ENCODE measurements at regions of chr5 and their contacts with region 1.

Region 1: GRCh38 chr5:119411935-119412602 is 40.2 kb upstream of the HSD17B4 start:
- DNase-seq: peak; percentile 76
- ATAC-seq: peak; percentile 94
- H3K4me3 ChIP-seq: peak overlapping the region; percentile 44 to 52
- H3K27ac ChIP-seq: peak overlapping the region; percentile 3; the same call in 1 of the 2 replicates
- H3K4me1 ChIP-seq: peaks cover 0 to 10% of the 10 kb centered on the region in 2 experiments; a peak in 2 of 4 replicates
- H3K27me3 ChIP-seq: no peaks in the 10 kb centered on the region
- CTCF ChIP-seq: peak; percentile 85 to 97 (median 97)
- POLR2A ChIP-seq: no peak
- RAD21 ChIP-seq: peak; percentile 92

Region 2: GRCh38 chr5:118891252-118891651 is 520.8 kb before region 1 on chr5:
- CTCF ChIA-PET with region 1: no interaction called
- POLR2A ChIA-PET with region 1: no interaction called
- RAD21 ChIA-PET with region 1: no interaction called
- intact Hi-C with region 1: no loop called
- DNase-seq: no peak
- ATAC-seq: no peak
- H3K4me3 ChIP-seq: no peak overlapping the region
- H3K27ac ChIP-seq: no peak overlapping the region
- H3K4me1 ChIP-seq: no peaks in the 10 kb centered on the region
- H3K27me3 ChIP-seq: no peaks in the 10 kb centered on the region
- CTCF ChIP-seq: no peak
- POLR2A ChIP-seq: no peak
- RAD21 ChIP-seq: no peak

Region 3: GRCh38 chr5:119022017-119022745 is 389.9 kb before region 1 on chr5:
- CTCF ChIA-PET with region 1: interaction called, 33 read pairs
- POLR2A ChIA-PET with region 1: no interaction called
- RAD21 ChIA-PET with region 1: no interaction called
- intact Hi-C with region 1: loop called (anchors 1 kb)
- DNase-seq: no peak
- ATAC-seq: peak; percentile 59
- H3K4me3 ChIP-seq: no peak overlapping the region
- H3K27ac ChIP-seq: no peak overlapping the region
- H3K4me1 ChIP-seq: no peaks in the 10 kb centered on the region
- H3K27me3 ChIP-seq: no peaks in the 10 kb centered on the region
- CTCF ChIP-seq: peak; percentile 30 to 78 (median 57); a peak in 4 of 6 replicates
- POLR2A ChIP-seq: no peak
- RAD21 ChIP-seq: peak; percentile 88

Region 4: GRCh38 chr5:119070828-119071572 is 341.1 kb before region 1 on chr5 and contains the start of gene DMXL1:
- CTCF ChIA-PET with region 1: interaction called, 3 read pairs
- POLR2A ChIA-PET with region 1: no interaction called
- RAD21 ChIA-PET with region 1: no interaction called
- intact Hi-C with region 1: loop called (anchors 2 kb)
- DNase-seq: peak; percentile 99
- ATAC-seq: peak; percentile 93
- H3K4me3 ChIP-seq: peak within 1 kb of the TSS; percentile 80 to 87
- H3K27ac ChIP-seq: peak within 1 kb of the TSS; percentile 70
- H3K4me1 ChIP-seq: peaks cover 10 to 13% of the 10 kb centered on the region in 2 experiments; a peak in 3 of 4 replicates
- H3K27me3 ChIP-seq: no peaks in the 10 kb centered on the region
- CTCF ChIP-seq: no peak
- POLR2A ChIP-seq: no peak
- RAD21 ChIP-seq: no peak
- total RNA-seq, gene DMXL1: 21.1 TPM

Region 5: GRCh38 chr5:119267958-119268386 is 144.1 kb before region 1 on chr5:
- CTCF ChIA-PET with region 1: interaction called, 8 read pairs
- POLR2A ChIA-PET with region 1: no interaction called
- RAD21 ChIA-PET with region 1: no interaction called
- intact Hi-C with region 1: loop called (anchors 10 kb)
- DNase-seq: peak; percentile 62
- ATAC-seq: peak; percentile 67
- H3K4me3 ChIP-seq: peak overlapping the region; percentile 70 to 84
- H3K27ac ChIP-seq: peak overlapping the region; percentile 72; the same call in 1 of the 2 replicates
- H3K4me1 ChIP-seq: peaks cover 11 to 24% of the 10 kb centered on the region in 2 experiments
- H3K27me3 ChIP-seq: no peaks in the 10 kb centered on the region
- CTCF ChIP-seq: no peak
- POLR2A ChIP-seq: no peak
- RAD21 ChIP-seq: no peak; the same call in 1 of the 2 replicates

Region 6: GRCh38 chr5:119315516-119315949 is 96.5 kb before region 1 on chr5:
- CTCF ChIA-PET with region 1: interaction called, 8 read pairs
- POLR2A ChIA-PET with region 1: no interaction called
- RAD21 ChIA-PET with region 1: interaction called in 1 of 2 experiments, 7 read pairs
- intact Hi-C with region 1: loop called (anchors 5 kb)
- DNase-seq: no peak
- ATAC-seq: peak; percentile 94
- H3K4me3 ChIP-seq: no peak overlapping the region
- H3K27ac ChIP-seq: no peak overlapping the region
- H3K4me1 ChIP-seq: peaks cover 7 to 14% of the 10 kb centered on the region in 2 experiments; a peak in 3 of 4 replicates
- H3K27me3 ChIP-seq: no peaks in the 10 kb centered on the region
- CTCF ChIP-seq: peak; percentile 32 to 50 (median 42); a peak in 4 of 6 replicates
- POLR2A ChIP-seq: no peak
- RAD21 ChIP-seq: peak; percentile 54

Region 7: GRCh38 chr5:119426057-119426456 is 14.0 kb after region 1 on chr5:
- CTCF ChIA-PET with region 1: no interaction called
- POLR2A ChIA-PET with region 1: no interaction called
- RAD21 ChIA-PET with region 1: no interaction called
- intact Hi-C with region 1: no loop called
- DNase-seq: no peak
- ATAC-seq: no peak
- H3K4me3 ChIP-seq: no peak overlapping the region
- H3K27ac ChIP-seq: no peak overlapping the region
- H3K4me1 ChIP-seq: no peaks in the 10 kb centered on the region
- H3K27me3 ChIP-seq: no peaks in the 10 kb centered on the region
- CTCF ChIP-seq: no peak
- POLR2A ChIP-seq: no peak
- RAD21 ChIP-seq: no peak

Region 8: GRCh38 chr5:119578937-119579336 is 166.9 kb after region 1 on chr5:
- CTCF ChIA-PET with region 1: no interaction called
- POLR2A ChIA-PET with region 1: no interaction called
- RAD21 ChIA-PET with region 1: no interaction called
- intact Hi-C with region 1: no loop called
- DNase-seq: peak; percentile 70
- ATAC-seq: peak; percentile 100
- H3K4me3 ChIP-seq: no peak overlapping the region
- H3K27ac ChIP-seq: no peak overlapping the region
- H3K4me1 ChIP-seq: no peaks in the 10 kb centered on the region
- H3K27me3 ChIP-seq: no peaks in the 10 kb centered on the region
- CTCF ChIP-seq: peak; percentile 28 to 62 (median 43); a peak in 5 of 6 replicates
- POLR2A ChIP-seq: no peak
- RAD21 ChIP-seq: peak; percentile 50